ENCODE measurements at regions of chr6 and their contacts with region 1.

Region 1: GRCh38 chr6:34154668-34155447 is 9.0 kb upstream of the GRM4 start:
- DNase-seq: peak; percentile 81
- H3K27ac ChIP-seq: no peak overlapping the region
- CTCF ChIP-seq: peak; percentile 97

Region 2: DNA sequence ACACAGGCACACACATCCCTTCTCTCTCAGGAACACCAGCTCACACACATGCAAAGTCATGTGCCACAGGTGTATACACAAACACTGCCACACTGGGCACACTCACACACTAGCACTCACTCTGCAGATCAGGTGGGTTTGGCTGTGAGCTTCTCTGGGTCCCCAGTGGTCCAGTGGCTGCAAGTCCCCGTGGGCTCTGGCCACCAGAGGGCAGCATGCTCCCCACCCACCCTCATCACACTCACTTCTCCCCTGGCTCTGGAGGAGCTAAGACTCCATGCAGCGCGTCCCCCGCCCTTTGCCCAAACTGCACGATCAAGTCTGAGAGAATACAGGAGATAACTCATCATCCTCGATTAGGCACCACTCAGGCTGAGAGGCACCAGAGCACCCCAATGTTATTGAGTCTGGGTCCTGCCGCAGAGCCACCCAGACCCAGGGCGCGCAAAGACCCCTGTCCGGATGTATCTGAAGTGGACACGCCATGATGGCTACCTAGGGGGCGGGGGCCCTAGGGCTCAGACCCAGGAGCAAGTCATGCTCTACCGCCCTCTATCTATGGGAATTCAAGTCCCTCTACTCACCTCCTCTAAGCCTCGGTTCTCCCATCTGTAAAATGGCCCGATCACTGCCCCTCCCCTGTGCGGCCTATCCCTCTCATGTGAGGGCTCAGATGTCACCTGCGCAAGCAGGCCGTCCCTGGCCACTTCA is 99.5 kb before region 1 on chr6:
- CTCF ChIA-PET with region 1: interaction called, 33 read pairs
- POLR2A ChIA-PET with region 1: no interaction called
- DNase-seq: peak; percentile 72
- H3K27ac ChIP-seq: no peak overlapping the region
- CTCF ChIP-seq: peak; percentile 80

Region 3: GRCh38 chr6:34459899-34460593 is 305.2 kb after region 1 on chr6:
- CTCF ChIA-PET with region 1: no interaction called
- POLR2A ChIA-PET with region 1: no interaction called
- DNase-seq: peak; percentile 46
- H3K27ac ChIP-seq: peak overlapping the region; percentile 52
- CTCF ChIP-seq: peak; percentile 55